ENCODE measurements at regions of chr1 and their contacts with region 1.

Region 1: DNA sequence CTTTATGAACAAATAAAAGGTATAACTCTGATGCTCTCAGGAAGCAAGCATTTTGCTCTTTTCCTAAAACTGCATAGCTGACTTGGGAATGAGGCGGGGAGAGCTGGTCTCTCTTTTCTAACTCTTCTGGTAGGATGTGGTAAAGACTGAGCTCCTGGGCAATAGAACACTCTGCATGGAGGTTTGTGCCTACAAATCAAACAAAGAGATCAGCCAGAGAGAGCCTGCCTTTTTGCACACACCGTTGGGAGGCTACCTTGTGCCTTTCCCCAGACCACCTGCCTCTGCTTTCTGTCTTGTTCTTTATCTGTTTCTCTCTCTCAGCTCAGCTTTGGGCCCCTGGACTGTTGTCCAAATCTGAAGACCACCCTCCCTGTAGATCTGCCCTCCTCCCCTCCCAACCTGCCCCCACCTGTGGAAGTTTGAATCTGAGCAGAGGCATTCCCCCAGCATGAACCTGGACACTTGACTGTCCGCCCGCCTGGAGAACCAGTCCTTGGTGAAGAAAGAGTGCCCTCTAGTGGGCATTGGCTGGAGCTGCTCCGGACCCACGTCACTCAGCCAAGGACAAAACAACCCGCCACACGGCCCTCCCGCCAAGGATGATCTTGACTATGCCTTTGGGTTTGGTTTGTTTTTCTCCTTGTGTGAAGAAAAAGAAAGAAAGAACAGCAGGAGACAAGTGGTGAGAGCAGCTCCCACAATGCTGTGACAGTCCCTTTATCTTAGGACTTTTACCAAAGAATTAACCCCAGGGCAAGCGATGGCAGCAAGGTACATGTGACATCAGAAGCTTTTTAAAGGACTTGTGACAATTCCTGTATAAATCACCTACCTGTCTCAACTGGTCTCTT is 228.2 kb downstream of the PBX1 start:
- DNase-seq: peak; percentile 48
- H3K4me3 ChIP-seq: no peak overlapping the region
- H3K27ac ChIP-seq: no peak overlapping the region
- H3K27me3 ChIP-seq: no peaks in the 10 kb centered on the region
- CTCF ChIP-seq: peak; percentile 97

Region 2: DNA sequence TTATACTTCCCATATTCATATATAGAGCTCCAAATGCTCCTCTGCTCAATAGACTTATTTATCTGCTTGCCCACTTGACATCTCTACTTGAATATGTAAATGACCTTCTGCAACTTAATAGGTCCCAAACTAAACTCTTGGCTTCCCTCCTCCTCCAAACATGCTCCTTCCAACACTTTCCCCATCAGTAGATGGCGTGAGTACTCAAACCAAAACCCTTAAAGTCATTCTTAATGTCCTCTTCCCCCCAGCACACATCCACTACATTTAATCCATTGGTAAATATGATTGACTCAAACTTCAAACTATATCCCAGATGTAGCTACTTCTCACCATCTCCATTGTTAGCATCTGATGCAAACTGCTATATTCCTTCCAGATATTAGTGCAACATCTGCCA is 276.8 kb before region 1 on chr1:
- CTCF ChIA-PET with region 1: interaction called, 13 read pairs
- POLR2A ChIA-PET with region 1: no interaction called
- DNase-seq: no peak
- H3K4me3 ChIP-seq: no peak overlapping the region
- H3K27ac ChIP-seq: no peak overlapping the region
- H3K27me3 ChIP-seq: peaks cover 8% of the 10 kb centered on the region
- CTCF ChIP-seq: peak; percentile 39

Region 3: GRCh38 chr1:164558461-164559341 is 228.5 kb before region 1 on chr1 and contains the start of gene PBX1:
- CTCF ChIA-PET with region 1: interaction called, 22 read pairs
- POLR2A ChIA-PET with region 1: interaction called, 3 read pairs
- DNase-seq: peak; percentile 95
- H3K4me3 ChIP-seq: peak within 1 kb of the TSS; percentile 76
- H3K27ac ChIP-seq: peak within 1 kb of the TSS; percentile 65
- H3K27me3 ChIP-seq: no peaks in the 10 kb centered on the region
- CTCF ChIP-seq: no peak
- polyA plus RNA-seq, gene PBX1: 46.6 and 49.9 TPM in 2 replicates

Region 4: GRCh38 chr1:164617377-164618201 is 169.6 kb before region 1 on chr1:
- CTCF ChIA-PET with region 1: interaction called, 14 read pairs
- POLR2A ChIA-PET with region 1: no interaction called
- DNase-seq: no peak
- H3K4me3 ChIP-seq: no peak overlapping the region
- H3K27ac ChIP-seq: no peak overlapping the region
- H3K27me3 ChIP-seq: no peaks in the 10 kb centered on the region
- CTCF ChIP-seq: peak; percentile 65

Region 5: GRCh38 chr1:164726235-164726634 is 61.0 kb before region 1 on chr1:
- CTCF ChIA-PET with region 1: interaction called, 10 read pairs
- POLR2A ChIA-PET with region 1: no interaction called
- DNase-seq: peak; percentile 85
- H3K4me3 ChIP-seq: no peak overlapping the region
- H3K27ac ChIP-seq: no peak overlapping the region
- H3K27me3 ChIP-seq: no peaks in the 10 kb centered on the region
- CTCF ChIP-seq: no peak

Region 6: DNA sequence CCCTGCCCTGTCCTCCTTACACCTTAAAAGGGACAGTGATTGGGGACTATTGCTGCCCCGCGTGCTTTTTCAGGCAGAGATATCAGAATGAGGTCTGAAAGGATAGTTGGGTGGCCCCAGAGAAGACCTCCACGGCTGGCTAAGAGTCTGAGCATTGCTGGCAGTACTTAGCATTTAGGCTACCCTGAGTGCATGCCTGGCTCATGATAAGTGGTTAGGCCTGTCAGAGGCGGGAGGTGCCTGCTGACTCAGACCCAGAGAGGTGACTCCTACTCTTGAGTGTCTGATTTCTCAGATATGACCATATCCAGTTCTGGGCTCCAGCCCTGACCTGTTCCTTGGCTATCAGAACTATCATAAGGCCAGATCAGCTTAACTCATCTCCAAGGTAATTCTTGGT is 14.6 kb before region 1 on chr1:
- CTCF ChIA-PET with region 1: interaction called, 50 read pairs
- POLR2A ChIA-PET with region 1: interaction called, 3 read pairs
- DNase-seq: peak; percentile 74
- H3K4me3 ChIP-seq: no peak overlapping the region
- H3K27ac ChIP-seq: peak overlapping the region; percentile 69
- H3K27me3 ChIP-seq: no peaks in the 10 kb centered on the region
- CTCF ChIP-seq: no peak

Region 7: GRCh38 chr1:164803366-164803765 is 16.2 kb after region 1 on chr1:
- CTCF ChIA-PET with region 1: interaction called, 21 read pairs
- POLR2A ChIA-PET with region 1: no interaction called
- DNase-seq: no peak
- H3K4me3 ChIP-seq: no peak overlapping the region
- H3K27ac ChIP-seq: no peak overlapping the region
- H3K27me3 ChIP-seq: no peaks in the 10 kb centered on the region
- CTCF ChIP-seq: no peak

Region 8: GRCh38 chr1:164953098-164953497 is 165.9 kb after region 1 on chr1:
- CTCF ChIA-PET with region 1: no interaction called
- POLR2A ChIA-PET with region 1: no interaction called
- DNase-seq: no peak
- H3K4me3 ChIP-seq: no peak overlapping the region
- H3K27ac ChIP-seq: no peak overlapping the region
- H3K27me3 ChIP-seq: no peaks in the 10 kb centered on the region
- CTCF ChIP-seq: peak; percentile 22; the same call in 1 of the 2 replicates

Measured in AG04450 (cell line).